ENCODE measurements at regions of chr15 and their contacts with region 1.

Region 1: DNA sequence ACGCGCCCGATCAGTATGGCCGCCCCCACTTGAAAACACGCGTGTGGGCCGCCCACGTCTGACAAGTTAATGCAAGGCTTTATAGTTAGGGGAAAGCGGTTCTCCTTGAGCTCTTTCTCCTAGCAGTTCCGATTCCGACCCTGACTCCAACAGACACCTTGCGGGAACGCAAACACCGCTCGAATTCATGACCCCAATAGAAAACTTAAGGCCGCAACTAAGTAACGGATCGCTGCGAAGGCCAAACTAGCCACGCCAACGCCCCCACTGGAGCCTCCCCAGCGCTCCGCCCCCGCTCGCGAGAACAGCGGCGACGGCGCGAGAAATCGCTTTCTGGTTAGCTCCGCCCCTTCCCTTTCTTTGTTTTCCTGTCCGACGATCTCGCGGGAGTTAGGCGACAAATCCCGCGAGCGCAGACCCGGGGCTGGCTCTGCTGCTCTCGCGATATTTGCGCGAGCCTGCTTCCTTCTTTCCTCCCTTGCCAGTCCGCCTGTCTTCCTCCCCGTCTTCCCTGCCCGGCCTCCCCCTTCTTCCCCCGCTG is at the start of gene IREB2:
- DNase-seq: peak; percentile 97 to 99 (median 98)
- H3K4me3 ChIP-seq: peak within 1 kb of the TSS; percentile 97
- H3K27ac ChIP-seq: peak within 1 kb of the TSS; percentile 88
- H3K4me1 ChIP-seq: peaks cover 4% of the 10 kb centered on the region
- H3K27me3 ChIP-seq: no peaks in the 10 kb centered on the region
- CTCF ChIP-seq: no peak
- EP300 ChIP-seq: no peak
- POLR2A ChIP-seq: peak; percentile 26
- total RNA-seq, gene IREB2: 29.3 to 54.5 (median 51.7) TPM

Region 2: DNA sequence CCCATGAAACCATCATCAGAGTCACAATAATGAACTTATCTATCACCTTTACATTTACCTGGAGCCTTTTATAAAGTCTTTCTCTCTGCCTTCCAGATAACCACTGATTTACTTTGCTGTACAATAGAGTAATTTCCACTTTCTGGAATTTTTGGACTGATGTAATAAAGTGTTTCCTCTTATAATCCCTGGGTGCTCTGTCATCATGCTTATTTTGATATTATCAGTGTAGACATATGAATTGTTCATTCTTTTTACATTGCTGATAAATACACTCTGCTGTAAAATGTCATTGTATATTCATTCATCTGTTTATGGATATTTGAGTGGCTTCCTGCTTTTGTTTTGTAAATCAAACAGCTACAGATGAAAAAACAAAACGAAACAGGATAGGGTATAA is 26.8 kb before region 1 on chr15:
- intact Hi-C with region 1: loop called in 1 of 4 experiments (anchors 1 kb)
- DNase-seq: no peak
- H3K4me3 ChIP-seq: no peak overlapping the region
- H3K27ac ChIP-seq: no peak overlapping the region
- H3K4me1 ChIP-seq: no peaks in the 10 kb centered on the region
- H3K27me3 ChIP-seq: no peaks in the 10 kb centered on the region
- CTCF ChIP-seq: no peak
- EP300 ChIP-seq: no peak
- POLR2A ChIP-seq: no peak

Measured in ovary (tissue), 10 donors.